GM12878 (cell line): ENCODE measurements at regions of chr9 and their contacts with region 1.

Region 1: GRCh38 chr9:3308609-3309008 is 217.2 kb downstream of the RFX3 start:
- DNase-seq: no peak
- ATAC-seq: no peak
- H3K4me3 ChIP-seq: no peak overlapping the region
- H3K27ac ChIP-seq: no peak overlapping the region
- H3K4me1 ChIP-seq: no peaks in the 10 kb centered on the region
- H3K27me3 ChIP-seq: no peaks in the 10 kb centered on the region
- CTCF ChIP-seq: no peak
- EP300 ChIP-seq: no peak
- POLR2A ChIP-seq: no peak
- RAD21 ChIP-seq: no peak

Region 2: GRCh38 chr9:3367185-3367584 is 58.6 kb after region 1 on chr9:
- CTCF ChIA-PET with region 1: no interaction called
- POLR2A ChIA-PET with region 1: no interaction called
- RAD21 ChIA-PET with region 1: no interaction called
- SMC1A ChIA-PET with region 1: interaction called, 4 read pairs
- in situ Hi-C with region 1: loop called (anchors 10 kb)
- intact Hi-C with region 1: loop called (anchors 10 kb)
- DNase-seq: no peak
- ATAC-seq: no peak
- H3K4me3 ChIP-seq: no peak overlapping the region
- H3K27ac ChIP-seq: no peak overlapping the region
- H3K4me1 ChIP-seq: no peaks in the 10 kb centered on the region
- H3K27me3 ChIP-seq: no peaks in the 10 kb centered on the region
- CTCF ChIP-seq: no peak
- EP300 ChIP-seq: no peak
- POLR2A ChIP-seq: no peak
- RAD21 ChIP-seq: no peak

Region 3: GRCh38 chr9:3906432-3907213 is 598.0 kb after region 1 on chr9:
- CTCF ChIA-PET with region 1: no interaction called
- POLR2A ChIA-PET with region 1: no interaction called
- RAD21 ChIA-PET with region 1: no interaction called
- SMC1A ChIA-PET with region 1: no interaction called
- in situ Hi-C with region 1: no loop called
- intact Hi-C with region 1: no loop called
- DNase-seq: no peak
- ATAC-seq: peak; percentile 47; the same call in 2 of the 3 replicates
- H3K4me3 ChIP-seq: no peak overlapping the region
- H3K27ac ChIP-seq: no peak overlapping the region
- H3K4me1 ChIP-seq: no peaks in the 10 kb centered on the region
- H3K27me3 ChIP-seq: peaks cover 0 to 2% of the 10 kb centered on the region in 2 experiments; a peak in 1 of 4 replicates
- CTCF ChIP-seq: no peak
- EP300 ChIP-seq: no peak
- POLR2A ChIP-seq: no peak
- RAD21 ChIP-seq: no peak